Gastrocnemius medialis (tissue), 4 donors: ENCODE measurements at regions of chr11 and their contacts with region 1.

Region 1: GRCh38 chr11:95231127-95231880 is at the start of gene SESN3:
- DNase-seq: peak; percentile 98
- ATAC-seq: peak; percentile 99
- H3K4me3 ChIP-seq: peak within 1 kb of the TSS; percentile 73 to 83 (median 76)
- H3K27ac ChIP-seq: peak within 1 kb of the TSS; percentile 68 to 79 (median 70)
- H3K4me1 ChIP-seq: peaks cover 22 to 25% of the 10 kb centered on the region in 2 donors
- H3K27me3 ChIP-seq: no peaks in the 10 kb centered on the region
- CTCF ChIP-seq: peak in 1 of 5 experiments; percentile 9
- POLR2A ChIP-seq: peak; percentile 37 to 77
- total RNA-seq, gene SESN3: 6.0 to 10.8 (median 7.8) TPM

Region 2: GRCh38 chr11:95337175-95337957 is 106.1 kb after region 1 on chr11:
- in situ Hi-C with region 1: no loop called
- intact Hi-C with region 1: loop called (anchors 5 kb)
- DNase-seq: peak; percentile 14 to 54
- ATAC-seq: peak; percentile 58 to 61
- H3K4me3 ChIP-seq: peak overlapping the region in 2 of 4 donors; percentile 14 to 16
- H3K27ac ChIP-seq: peak overlapping the region; percentile 69 to 80 (median 77)
- H3K4me1 ChIP-seq: peaks cover 36 to 37% of the 10 kb centered on the region in 2 donors
- H3K27me3 ChIP-seq: no peaks in the 10 kb centered on the region
- CTCF ChIP-seq: no peak
- POLR2A ChIP-seq: no peak

Region 3: DNA sequence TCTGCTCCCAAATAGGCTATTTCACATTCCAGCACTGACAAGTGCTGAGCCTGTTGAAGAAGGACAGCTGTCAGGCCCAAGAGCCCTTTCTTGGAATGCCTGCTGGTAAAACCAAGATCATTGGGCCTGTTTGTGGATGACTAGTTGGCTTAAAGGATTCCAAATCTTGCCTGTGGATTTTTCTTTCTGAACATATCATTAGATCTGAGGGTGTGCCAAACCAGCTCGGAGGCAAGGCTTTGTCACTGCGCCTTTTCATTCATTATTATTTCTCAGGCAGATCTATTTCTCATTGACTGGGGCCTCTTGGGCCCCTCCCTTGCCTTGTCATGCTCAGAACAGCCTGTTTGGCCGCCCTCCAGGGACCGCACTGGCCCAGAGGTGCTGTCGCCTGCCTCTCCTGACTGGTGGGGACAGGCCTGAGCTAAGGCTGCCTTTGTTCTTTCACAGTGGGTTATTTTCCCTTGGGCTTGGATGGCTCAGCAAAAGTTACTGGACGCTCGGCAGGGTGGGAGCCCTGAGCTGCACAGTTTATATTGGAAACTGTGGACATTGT is 222.4 kb after region 1 on chr11:
- in situ Hi-C with region 1: no loop called
- intact Hi-C with region 1: no loop called
- DNase-seq: no peak
- ATAC-seq: no peak
- H3K4me3 ChIP-seq: no peak overlapping the region
- H3K27ac ChIP-seq: no peak overlapping the region
- H3K4me1 ChIP-seq: no peaks in the 10 kb centered on the region
- H3K27me3 ChIP-seq: no peaks in the 10 kb centered on the region
- CTCF ChIP-seq: no peak
- POLR2A ChIP-seq: no peak